SK-N-SH (cell line): ENCODE measurements at regions of chr4 and their contacts with region 1.

Region 1: GRCh38 chr4:10157478-10158332 is 41.1 kb upstream of the WDR1 start:
- DNase-seq: peak; percentile 74
- H3K4me3 ChIP-seq: peak overlapping the region in 1 of 2 experiments; percentile 39; a peak in 1 of 4 replicates
- H3K27ac ChIP-seq: no peak overlapping the region
- H3K4me1 ChIP-seq: no peaks in the 10 kb centered on the region; a peak in 1 of 4 replicates
- H3K27me3 ChIP-seq: peaks cover 18% of the 10 kb centered on the region; the same call in 1 of the 2 replicates
- CTCF ChIP-seq: peak; percentile 83
- EP300 ChIP-seq: no peak
- RAD21 ChIP-seq: peak; percentile 77

Region 2: DNA sequence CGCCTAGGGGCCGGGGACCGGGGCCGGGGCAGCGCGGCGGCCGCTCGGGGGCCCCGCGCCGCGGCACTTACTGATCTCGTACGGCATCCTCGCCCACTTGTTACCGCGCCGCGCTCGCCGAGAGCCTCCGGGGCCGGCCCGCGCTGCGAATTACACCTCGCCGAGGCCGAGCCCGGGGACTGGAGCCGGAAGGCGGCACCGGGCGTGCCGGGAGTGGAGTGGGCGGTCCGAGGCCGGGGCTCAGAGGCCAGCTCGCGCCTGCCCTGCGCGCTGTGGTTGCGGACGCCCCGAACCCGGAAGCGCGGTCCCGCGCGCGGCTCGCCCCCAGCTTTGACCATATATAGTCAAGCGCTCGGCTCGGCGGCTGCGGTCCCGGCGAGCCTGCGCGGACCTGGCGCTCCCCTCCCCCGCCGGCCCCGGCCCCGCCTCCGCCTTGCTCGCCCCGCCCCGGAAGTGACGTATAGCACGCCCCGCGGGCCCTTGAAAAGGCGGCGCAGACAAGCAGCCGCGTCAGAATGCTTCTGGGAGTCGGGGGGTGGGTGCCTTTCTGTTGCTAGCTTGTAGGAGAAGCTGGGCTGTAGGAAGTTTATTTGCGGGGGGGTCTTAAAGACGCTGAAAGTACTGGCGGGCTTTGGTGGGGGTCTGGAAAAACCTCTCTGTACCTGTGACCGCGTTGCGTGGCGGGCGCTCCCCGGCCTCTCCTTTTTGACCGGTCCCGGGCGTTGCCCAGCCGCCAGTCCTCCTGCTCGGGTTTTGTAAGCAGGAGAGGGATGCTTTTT is 40.9 kb before region 1 on chr4 and contains the start of gene WDR1:
- CTCF ChIA-PET with region 1: interaction called, 10 read pairs
- POLR2A ChIA-PET with region 1: no interaction called
- DNase-seq: peak; percentile 96
- H3K4me3 ChIP-seq: peak within 1 kb of the TSS; percentile 72 to 85
- H3K27ac ChIP-seq: peak within 1 kb of the TSS; percentile 68 to 84
- H3K4me1 ChIP-seq: peaks cover 14 to 15% of the 10 kb centered on the region in 2 experiments; a peak in 2 of 4 replicates
- H3K27me3 ChIP-seq: no peaks in the 10 kb centered on the region
- CTCF ChIP-seq: no peak
- EP300 ChIP-seq: peak in 1 of 2 experiments; percentile 48; a peak in 1 of 4 replicates
- RAD21 ChIP-seq: no peak
- polyA plus RNA-seq, gene WDR1: 287 and 310 TPM in 2 replicates

Region 3: GRCh38 chr4:10140866-10141759 is 16.6 kb before region 1 on chr4:
- CTCF ChIA-PET with region 1: interaction called, 11 read pairs
- POLR2A ChIA-PET with region 1: no interaction called
- DNase-seq: no peak
- H3K4me3 ChIP-seq: no peak overlapping the region
- H3K27ac ChIP-seq: no peak overlapping the region
- H3K4me1 ChIP-seq: no peaks in the 10 kb centered on the region
- H3K27me3 ChIP-seq: peaks cover 17% of the 10 kb centered on the region; the same call in 1 of the 2 replicates
- CTCF ChIP-seq: no peak
- EP300 ChIP-seq: no peak
- RAD21 ChIP-seq: no peak

Region 4: GRCh38 chr4:10170683-10171454 is 13.2 kb after region 1 on chr4:
- CTCF ChIA-PET with region 1: interaction called, 14 read pairs
- POLR2A ChIA-PET with region 1: no interaction called
- DNase-seq: no peak
- H3K4me3 ChIP-seq: no peak overlapping the region
- H3K27ac ChIP-seq: no peak overlapping the region
- H3K4me1 ChIP-seq: peaks cover 3 to 11% of the 10 kb centered on the region in 2 experiments; a peak in 2 of 4 replicates
- H3K27me3 ChIP-seq: no peaks in the 10 kb centered on the region; the same call in 1 of the 2 replicates
- CTCF ChIP-seq: no peak
- EP300 ChIP-seq: no peak
- RAD21 ChIP-seq: no peak

Region 5: DNA sequence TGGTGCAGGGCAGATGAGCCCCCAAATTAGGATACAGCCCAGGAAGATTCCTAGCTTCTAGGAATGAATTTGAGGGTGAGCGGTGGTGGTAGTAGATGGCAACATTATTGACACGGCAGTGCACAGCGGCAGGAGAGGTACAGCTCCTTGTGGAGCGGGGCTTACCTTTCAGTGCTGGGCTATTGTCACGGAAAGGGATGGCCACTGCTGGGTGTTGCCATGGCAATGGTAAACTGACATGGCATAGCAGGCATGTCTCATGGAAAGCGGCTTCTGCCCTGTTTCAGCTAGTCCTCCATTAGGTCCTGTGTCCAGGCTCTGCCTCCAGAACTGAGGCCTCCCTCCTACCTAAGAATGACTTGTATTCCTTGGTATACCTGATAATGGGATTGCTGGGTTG is 40.7 kb after region 1 on chr4:
- CTCF ChIA-PET with region 1: no interaction called
- POLR2A ChIA-PET with region 1: no interaction called
- DNase-seq: no peak
- H3K4me3 ChIP-seq: no peak overlapping the region
- H3K27ac ChIP-seq: no peak overlapping the region
- H3K4me1 ChIP-seq: no peaks in the 10 kb centered on the region
- H3K27me3 ChIP-seq: no peaks in the 10 kb centered on the region
- CTCF ChIP-seq: no peak
- EP300 ChIP-seq: no peak
- RAD21 ChIP-seq: no peak

Region 6: DNA sequence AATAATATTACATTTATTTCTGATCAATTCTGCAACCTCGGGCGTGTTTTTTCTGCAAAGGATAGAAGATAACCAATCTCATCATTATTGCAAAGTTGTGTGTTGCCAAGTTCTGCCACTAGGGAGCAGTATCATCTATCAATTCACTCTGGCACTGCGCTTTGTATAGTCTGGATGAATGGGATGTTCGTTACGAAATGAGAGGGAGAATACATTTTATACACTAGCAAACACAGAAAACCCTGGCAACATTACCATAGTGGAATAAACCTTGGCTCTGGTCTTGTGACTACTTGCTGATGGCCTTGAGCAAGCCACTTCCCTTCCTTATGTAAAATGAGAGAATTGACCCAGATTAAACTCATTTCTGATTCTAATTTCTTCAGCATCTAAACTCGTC is 397.0 kb after region 1 on chr4:
- CTCF ChIA-PET with region 1: interaction called, 11 read pairs
- POLR2A ChIA-PET with region 1: no interaction called
- DNase-seq: peak; percentile 44
- H3K4me3 ChIP-seq: no peak overlapping the region
- H3K27ac ChIP-seq: no peak overlapping the region
- H3K4me1 ChIP-seq: no peaks in the 10 kb centered on the region
- H3K27me3 ChIP-seq: no peaks in the 10 kb centered on the region; the same call in 1 of the 2 replicates
- CTCF ChIP-seq: peak; percentile 87
- EP300 ChIP-seq: no peak
- RAD21 ChIP-seq: peak; percentile 73